A549 (cell line): ENCODE measurements at regions of chr4 and their contacts with region 1.

Region 1: DNA sequence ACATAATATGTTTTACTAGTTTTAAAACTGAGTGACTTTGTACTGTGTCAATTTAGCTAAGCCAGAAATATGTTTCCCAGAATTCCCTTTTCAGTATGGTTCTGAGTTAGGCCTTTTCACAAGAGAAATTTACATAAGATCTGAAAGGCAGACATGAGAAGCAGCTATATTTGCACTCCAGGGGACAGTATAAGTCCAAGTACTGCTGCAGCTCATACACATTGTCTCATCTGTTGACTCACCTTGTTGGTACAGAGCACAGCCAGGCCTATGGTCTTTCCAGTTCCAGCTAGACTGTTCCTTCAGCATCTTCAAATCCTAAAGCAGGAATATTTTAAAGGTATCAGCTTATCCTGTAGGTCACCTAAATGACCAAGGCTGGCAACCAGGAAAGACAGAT is 53.5 kb downstream of the BMP3 start:
- DNase-seq: peak in 1 of 2 experiments; percentile 10
- ATAC-seq: peak in 1 of 2 experiments; percentile 62; a peak in 2 of 6 replicates
- H3K4me3 ChIP-seq: no peak overlapping the region
- H3K27ac ChIP-seq: no peak overlapping the region
- H3K4me1 ChIP-seq: no peaks in the 10 kb centered on the region
- CTCF ChIP-seq: no peak
- EP300 ChIP-seq: no peak
- POLR2A ChIP-seq: no peak
- RAD21 ChIP-seq: peak in 1 of 2 experiments; percentile 29; a peak in 2 of 5 replicates

Region 2: DNA sequence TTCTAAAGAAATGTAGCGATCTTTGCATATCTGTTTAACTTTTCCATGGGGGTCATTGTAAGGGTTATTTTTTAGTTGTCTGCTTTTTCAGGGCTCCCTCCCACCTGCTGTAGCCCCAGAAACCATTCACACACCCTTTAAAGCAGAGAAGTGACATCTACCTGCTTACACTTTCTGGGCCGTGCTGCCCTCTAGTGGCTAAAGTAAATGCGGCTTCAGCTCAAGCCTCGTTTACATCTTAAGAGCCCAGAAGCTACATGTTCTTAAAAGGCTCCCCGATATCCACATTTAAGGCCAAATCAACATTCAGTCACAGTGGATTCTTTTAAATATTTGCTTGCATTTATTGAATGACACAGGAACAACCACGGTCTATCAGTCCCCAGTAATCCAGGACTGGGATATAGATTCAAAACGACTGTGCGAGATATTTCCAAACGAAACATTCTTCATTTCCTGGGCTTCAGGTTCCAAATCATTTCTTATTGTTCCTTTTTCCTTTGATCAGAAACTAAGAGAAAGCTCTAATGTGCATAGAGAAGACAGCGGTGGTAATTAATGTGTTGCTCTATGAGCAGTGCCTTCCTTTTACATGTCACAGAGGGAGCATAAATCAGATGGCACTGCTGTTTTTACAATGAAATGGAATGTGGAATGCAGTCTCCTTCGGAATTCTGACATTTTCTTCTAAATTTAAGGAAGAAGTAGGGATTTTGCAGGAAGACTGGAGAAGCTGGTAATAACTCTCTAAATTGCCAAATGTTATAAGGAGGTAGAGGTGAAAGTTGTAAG is 267.8 kb after region 1 on chr4:
- CTCF ChIA-PET with region 1: interaction called, 10 read pairs
- POLR2A ChIA-PET with region 1: no interaction called
- DNase-seq: peak; percentile 21 to 69
- ATAC-seq: peak; percentile 80 to 89; a peak in 4 of 6 replicates
- H3K4me3 ChIP-seq: no peak overlapping the region
- H3K27ac ChIP-seq: no peak overlapping the region
- H3K4me1 ChIP-seq: no peaks in the 10 kb centered on the region
- CTCF ChIP-seq: peak; percentile 74
- EP300 ChIP-seq: no peak
- POLR2A ChIP-seq: no peak
- RAD21 ChIP-seq: peak; percentile 74 to 75